CD4-positive, alpha-beta memory T cell (primary cell): ENCODE measurements at regions of chr10 and their contacts with region 1.

Region 1: DNA sequence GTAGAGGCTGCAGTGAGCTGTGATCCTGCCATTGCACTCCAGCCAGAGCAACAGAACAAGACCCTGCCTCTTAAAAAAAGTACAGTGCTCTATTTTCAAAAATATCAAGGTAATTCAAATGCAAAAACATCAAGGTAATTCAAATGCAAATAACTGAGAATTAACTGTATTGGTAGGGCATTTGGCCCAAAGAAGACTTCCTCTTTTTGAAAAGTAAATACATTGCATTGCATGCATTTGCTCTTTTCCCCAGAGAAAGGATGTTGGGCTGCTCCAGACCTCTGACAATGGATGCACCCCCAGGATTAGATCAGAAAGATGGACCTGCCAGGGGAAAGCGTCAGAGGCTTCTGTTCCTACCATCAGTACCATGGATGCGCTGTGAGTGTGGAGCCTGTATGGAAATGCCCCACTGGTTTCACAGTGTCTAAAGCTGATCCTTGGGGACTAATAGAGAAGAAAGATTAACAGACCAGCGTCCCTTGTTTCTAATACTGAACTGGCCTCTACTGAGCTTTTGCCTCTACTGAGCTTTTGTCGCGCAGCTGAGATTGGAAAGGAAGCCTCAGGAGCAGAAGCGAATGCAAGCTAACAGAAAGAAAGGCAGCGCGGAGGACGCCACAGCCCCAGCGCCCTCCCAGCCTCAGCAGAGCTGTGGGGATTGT is 93.5 kb upstream of the LYZL2 start:
- DNase-seq: no peak
- H3K4me3 ChIP-seq: no peak overlapping the region
- H3K4me3 Mint-ChIP-seq: no peak overlapping the region
- H3K27ac ChIP-seq: no peak overlapping the region
- H3K27ac Mint-ChIP-seq: no peak overlapping the region
- H3K4me1 ChIP-seq: no peaks in the 10 kb centered on the region
- H3K4me1 Mint-ChIP-seq: peaks cover 0 to 4% (median 2%) of the 10 kb centered on the region in 4 donors
- H3K27me3 ChIP-seq: no peaks in the 10 kb centered on the region
- H3K27me3 Mint-ChIP-seq: no peaks in the 10 kb centered on the region

Region 2: GRCh38 chr10:30680908-30681307 is 42.2 kb before region 1 on chr10:
- CTCF ChIA-PET with region 1: interaction called, 279 read pairs
- POLR2A ChIA-PET with region 1: interaction called, 3 read pairs
- intact Hi-C with region 1: no loop called
- DNase-seq: no peak
- H3K4me3 ChIP-seq: no peak overlapping the region
- H3K4me3 Mint-ChIP-seq: no peak overlapping the region
- H3K27ac ChIP-seq: no peak overlapping the region
- H3K27ac Mint-ChIP-seq: no peak overlapping the region
- H3K4me1 ChIP-seq: no peaks in the 10 kb centered on the region
- H3K4me1 Mint-ChIP-seq: peaks cover 0 to 4% (median 0%) of the 10 kb centered on the region in 4 donors
- H3K27me3 ChIP-seq: no peaks in the 10 kb centered on the region
- H3K27me3 Mint-ChIP-seq: peaks cover 14 to 34% of the 10 kb centered on the region in 2 donors

Region 3: DNA sequence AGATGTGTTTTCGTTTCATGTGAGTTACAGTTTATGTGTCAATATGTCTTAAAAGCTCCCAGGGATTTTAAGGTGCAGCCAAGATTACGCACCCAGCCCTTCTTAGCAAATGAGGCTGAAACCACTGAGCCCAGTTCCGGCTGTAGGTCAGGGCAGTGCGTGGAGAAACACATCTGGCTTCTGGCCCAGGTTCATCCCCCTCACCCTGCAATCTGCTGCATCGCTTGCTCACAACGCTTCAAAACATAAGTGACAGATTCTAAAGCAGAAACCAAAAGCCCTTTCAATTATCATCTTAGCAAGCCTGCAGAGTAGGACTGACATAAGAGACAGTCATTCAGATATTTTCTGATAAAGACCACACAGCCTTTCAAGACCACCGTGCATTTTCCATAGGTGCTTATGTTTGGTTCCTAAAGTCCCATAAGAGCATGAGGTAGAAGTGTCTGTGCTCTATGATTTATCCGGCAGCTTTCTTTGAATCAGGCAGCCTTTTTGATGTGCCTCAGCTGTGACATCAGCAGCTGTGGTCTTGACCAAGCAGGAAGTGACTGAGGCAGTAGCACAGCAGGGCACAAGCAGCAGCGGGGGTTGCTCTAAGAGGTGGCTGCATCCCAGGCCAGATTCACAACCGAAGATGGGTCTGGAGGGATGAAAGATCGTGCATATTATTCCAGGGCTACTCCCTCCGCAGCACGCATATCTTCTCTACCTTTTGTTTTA is 21.5 kb before region 1 on chr10:
- CTCF ChIA-PET with region 1: interaction called, 279 read pairs
- POLR2A ChIA-PET with region 1: interaction called, 4 read pairs
- intact Hi-C with region 1: loop called (anchors 1 kb)
- DNase-seq: peak; percentile 75 to 88 (median 78)
- H3K4me3 ChIP-seq: peak overlapping the region in 1 of 2 donors; percentile 28
- H3K4me3 Mint-ChIP-seq: peak overlapping the region; percentile 78 to 88 (median 84)
- H3K27ac ChIP-seq: peak overlapping the region; percentile 59
- H3K27ac Mint-ChIP-seq: peak overlapping the region; percentile 90 to 98 (median 95)
- H3K4me1 ChIP-seq: peaks cover 89% of the 10 kb centered on the region
- H3K4me1 Mint-ChIP-seq: peaks cover 53 to 90% (median 77%) of the 10 kb centered on the region in 4 donors
- H3K27me3 ChIP-seq: no peaks in the 10 kb centered on the region
- H3K27me3 Mint-ChIP-seq: no peaks in the 10 kb centered on the region

Region 4: GRCh38 chr10:31770307-31770902 is 1047.3 kb after region 1 on chr10:
- CTCF ChIA-PET with region 1: interaction called, 3 read pairs
- POLR2A ChIA-PET with region 1: no interaction called
- intact Hi-C with region 1: loop called (anchors 1 kb)
- DNase-seq: peak; percentile 50 to 54 (median 51)
- H3K4me3 ChIP-seq: no peak overlapping the region
- H3K4me3 Mint-ChIP-seq: no peak overlapping the region
- H3K27ac ChIP-seq: no peak overlapping the region
- H3K27ac Mint-ChIP-seq: no peak overlapping the region
- H3K4me1 ChIP-seq: no peaks in the 10 kb centered on the region
- H3K4me1 Mint-ChIP-seq: no peaks in the 10 kb centered on the region
- H3K27me3 ChIP-seq: no peaks in the 10 kb centered on the region
- H3K27me3 Mint-ChIP-seq: no peaks in the 10 kb centered on the region

Region 5: GRCh38 chr10:32207544-32207943 is 1484.5 kb after region 1 on chr10:
- CTCF ChIA-PET with region 1: no interaction called
- POLR2A ChIA-PET with region 1: no interaction called
- intact Hi-C with region 1: loop called (anchors 5 kb)
- DNase-seq: peak; percentile 39 to 52 (median 45)
- H3K4me3 ChIP-seq: no peak overlapping the region
- H3K4me3 Mint-ChIP-seq: no peak overlapping the region
- H3K27ac ChIP-seq: no peak overlapping the region
- H3K27ac Mint-ChIP-seq: no peak overlapping the region
- H3K4me1 ChIP-seq: no peaks in the 10 kb centered on the region
- H3K4me1 Mint-ChIP-seq: peaks cover 0 to 2% (median 0%) of the 10 kb centered on the region in 4 donors
- H3K27me3 ChIP-seq: no peaks in the 10 kb centered on the region
- H3K27me3 Mint-ChIP-seq: peaks cover 1% of the 10 kb centered on the region in 2 donors